ENCODE measurements at regions of chr1 and their contacts with region 1.

Region 1: DNA sequence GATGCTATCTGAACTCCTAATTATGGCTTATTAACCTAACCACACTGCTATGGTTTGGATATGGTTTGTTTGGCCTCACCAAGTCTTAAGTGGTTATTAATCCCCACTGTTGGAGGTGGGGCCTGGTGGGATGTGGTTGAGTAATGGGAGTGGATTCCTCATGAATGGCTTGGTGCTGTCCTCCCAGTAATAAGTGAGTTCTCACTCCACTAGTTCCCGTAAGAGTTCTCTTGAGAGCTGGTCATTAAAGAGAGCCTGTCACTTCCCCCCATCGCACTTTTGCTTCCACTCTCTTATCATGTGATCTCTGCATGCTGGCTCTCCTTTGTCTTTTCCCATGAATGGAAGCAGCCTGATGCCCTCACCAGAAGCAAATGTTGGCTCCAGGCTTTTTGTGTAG is 328.8 kb downstream of the PLA2G4A start:
- DNase-seq: peak; percentile 28
- H3K4me3 ChIP-seq: no peak overlapping the region
- H3K27ac ChIP-seq: no peak overlapping the region
- H3K4me1 ChIP-seq: no peaks in the 10 kb centered on the region
- H3K27me3 ChIP-seq: no peaks in the 10 kb centered on the region
- CTCF ChIP-seq: no peak

Region 2: DNA sequence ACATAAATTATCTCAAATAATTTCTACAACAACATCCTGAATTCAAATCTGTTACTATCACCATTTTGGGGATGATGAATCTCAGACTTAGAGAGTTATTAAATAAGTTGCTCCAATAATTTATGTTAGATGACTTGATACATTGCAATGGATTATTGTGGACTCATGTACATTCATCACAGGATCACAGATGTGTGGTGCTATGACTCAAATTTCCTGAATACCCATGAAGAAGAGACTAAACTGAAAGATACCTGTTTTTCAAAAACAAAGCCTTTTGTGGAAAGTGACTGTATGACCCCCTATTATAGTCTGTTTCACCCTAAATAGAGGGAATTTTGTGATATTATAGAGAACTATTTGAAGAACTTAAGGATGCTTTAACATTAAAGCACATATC is 13.8 kb before region 1 on chr1:
- CTCF ChIA-PET with region 1: no interaction called
- POLR2A ChIA-PET with region 1: no interaction called
- intact Hi-C with region 1: loop called (anchors 2 kb)
- DNase-seq: no peak
- H3K4me3 ChIP-seq: no peak overlapping the region
- H3K27ac ChIP-seq: no peak overlapping the region
- H3K4me1 ChIP-seq: no peaks in the 10 kb centered on the region
- H3K27me3 ChIP-seq: no peaks in the 10 kb centered on the region
- CTCF ChIP-seq: no peak

Measured in A673 (cell line).